Panc1 (cell line): ENCODE measurements at regions of chr17 and their contacts with region 1.

Region 1: GRCh38 chr17:30886187-30886586 is 19.9 kb downstream of the TEFM start:
- DNase-seq: no peak
- ATAC-seq: no peak
- H3K4me3 ChIP-seq: no peak overlapping the region
- H3K27ac ChIP-seq: no peak overlapping the region
- H3K4me1 ChIP-seq: no peaks in the 10 kb centered on the region
- H3K27me3 ChIP-seq: no peaks in the 10 kb centered on the region
- CTCF ChIP-seq: no peak

Region 2: GRCh38 chr17:30790279-30790678 is 95.9 kb before region 1 on chr17:
- CTCF ChIA-PET with region 1: interaction called, 14 read pairs
- POLR2A ChIA-PET with region 1: no interaction called
- in situ Hi-C with region 1: no loop called
- intact Hi-C with region 1: no loop called
- DNase-seq: no peak
- ATAC-seq: no peak
- H3K4me3 ChIP-seq: no peak overlapping the region
- H3K27ac ChIP-seq: no peak overlapping the region
- H3K4me1 ChIP-seq: no peaks in the 10 kb centered on the region
- H3K27me3 ChIP-seq: no peaks in the 10 kb centered on the region
- CTCF ChIP-seq: no peak

Region 3: DNA sequence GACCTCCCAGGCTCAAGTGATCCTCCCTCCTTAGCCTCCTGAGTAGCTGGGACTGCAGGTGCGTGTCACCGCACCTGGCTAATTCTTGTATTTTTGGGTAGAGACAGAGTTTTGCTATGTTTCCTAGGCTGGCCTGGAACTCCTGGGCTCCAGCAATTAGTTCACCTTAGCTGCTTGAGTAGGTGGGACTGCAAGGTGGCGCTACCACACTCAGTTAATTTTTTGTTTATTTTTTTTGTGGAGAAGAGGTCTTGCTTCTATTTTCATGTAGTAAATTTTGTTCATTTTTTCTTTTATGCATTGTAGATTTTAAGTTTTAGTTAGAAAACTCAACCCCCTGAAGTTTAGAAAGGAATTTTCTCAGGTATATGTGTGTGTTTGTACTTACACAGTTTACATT is 106.4 kb after region 1 on chr17:
- CTCF ChIA-PET with region 1: no interaction called
- POLR2A ChIA-PET with region 1: no interaction called
- in situ Hi-C with region 1: no loop called
- intact Hi-C with region 1: no loop called
- DNase-seq: no peak
- ATAC-seq: no peak
- H3K4me3 ChIP-seq: no peak overlapping the region
- H3K27ac ChIP-seq: no peak overlapping the region
- H3K4me1 ChIP-seq: no peaks in the 10 kb centered on the region
- H3K27me3 ChIP-seq: no peaks in the 10 kb centered on the region
- CTCF ChIP-seq: no peak

Region 4: GRCh38 chr17:31105991-31106390 is 219.8 kb after region 1 on chr17:
- CTCF ChIA-PET with region 1: no interaction called
- POLR2A ChIA-PET with region 1: interaction called, 15 read pairs
- in situ Hi-C with region 1: no loop called
- intact Hi-C with region 1: no loop called
- DNase-seq: no peak
- ATAC-seq: no peak
- H3K4me3 ChIP-seq: no peak overlapping the region
- H3K27ac ChIP-seq: no peak overlapping the region
- H3K4me1 ChIP-seq: peaks cover 2% of the 10 kb centered on the region
- H3K27me3 ChIP-seq: no peaks in the 10 kb centered on the region
- CTCF ChIP-seq: no peak